Heart left ventricle (tissue), 16 donors: ENCODE measurements at regions of chr11 and their contacts with region 1.

Region 1: GRCh38 chr11:71977743-71978418 is 20.8 kb upstream of the IL18BP start:
- DNase-seq: peak in 1 of 5 donors; percentile 39
- ATAC-seq: peak in 3 of 4 donors; percentile 31 to 69 (median 50)
- H3K4me3 ChIP-seq: no peak overlapping the region
- H3K27ac ChIP-seq: no peak overlapping the region
- H3K4me1 ChIP-seq: peaks cover 0 to 8% (median 0%) of the 10 kb centered on the region in 12 donors
- H3K27me3 ChIP-seq: no peaks in the 10 kb centered on the region
- CTCF ChIP-seq: peak; percentile 64 to 80 (median 72)
- POLR2A ChIP-seq: no peak

Region 2: GRCh38 chr11:71928737-71929452 is 49.0 kb before region 1 on chr11 and contains the start of gene RNF121:
- intact Hi-C with region 1: no loop called
- DNase-seq: peak; percentile 98
- ATAC-seq: peak; percentile 99 to 100 (median 99)
- H3K4me3 ChIP-seq: peak within 1 kb of the TSS; percentile 67 to 93 (median 82)
- H3K27ac ChIP-seq: peak within 1 kb of the TSS; percentile 83 to 97 (median 88)
- H3K4me1 ChIP-seq: peaks cover 4 to 52% (median 30%) of the 10 kb centered on the region in 12 donors
- H3K27me3 ChIP-seq: no peaks in the 10 kb centered on the region
- CTCF ChIP-seq: no peak
- POLR2A ChIP-seq: peak in 1 of 2 donors; percentile 50
- total RNA-seq, gene RNF121: 15.4 to 28.2 (median 22.0) TPM

Region 3: DNA sequence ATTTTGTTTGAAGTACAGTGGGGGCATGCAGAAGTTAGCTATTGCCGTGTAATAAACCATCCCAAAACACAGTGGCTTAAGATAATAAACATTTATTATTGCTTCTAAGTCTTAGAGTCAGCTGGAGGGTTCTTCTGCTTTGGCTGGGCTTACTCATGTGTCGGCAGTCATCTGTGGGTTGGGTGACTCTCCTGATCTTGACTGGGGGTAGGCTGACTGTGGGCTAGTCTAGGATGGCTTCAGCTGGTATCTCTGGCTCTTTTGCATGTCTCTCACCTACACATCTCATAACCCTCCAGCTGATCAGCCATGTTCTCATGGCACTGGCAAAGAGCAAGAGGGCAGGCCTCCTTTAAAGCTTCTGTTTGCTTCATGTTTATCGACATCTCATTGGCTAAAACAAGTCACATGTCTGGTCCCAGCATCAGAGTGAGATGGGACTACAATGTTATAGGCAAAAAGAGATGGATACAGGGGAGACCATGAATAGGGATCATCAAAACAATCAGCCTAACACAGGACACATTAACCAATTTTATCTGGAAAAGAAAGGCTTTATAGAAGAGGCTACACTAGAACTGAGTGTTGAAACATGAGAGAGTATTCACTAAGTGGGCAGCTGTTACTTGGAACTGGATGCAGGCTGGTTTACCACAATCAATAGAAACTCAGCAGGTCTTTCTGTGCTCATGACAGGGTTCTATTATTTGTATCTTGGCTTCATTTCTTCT is 107.9 kb after region 1 on chr11:
- intact Hi-C with region 1: loop called in 6 of 10 experiments (anchors 2 to 5 kb)
- DNase-seq: no peak
- ATAC-seq: no peak
- H3K4me3 ChIP-seq: no peak overlapping the region
- H3K27ac ChIP-seq: no peak overlapping the region
- H3K4me1 ChIP-seq: peaks cover 0 to 22% (median 7%) of the 10 kb centered on the region in 12 donors
- H3K27me3 ChIP-seq: no peaks in the 10 kb centered on the region
- CTCF ChIP-seq: no peak
- POLR2A ChIP-seq: no peak

Region 4: GRCh38 chr11:72091005-72091691 is 113.3 kb after region 1 on chr11:
- intact Hi-C with region 1: loop called in 7 of 10 experiments (anchors 2 to 5 kb)
- DNase-seq: peak in 4 of 5 donors; percentile 73 to 78 (median 74)
- ATAC-seq: peak; percentile 73 to 95 (median 92)
- H3K4me3 ChIP-seq: no peak overlapping the region
- H3K27ac ChIP-seq: peak overlapping the region in 4 of 12 donors; percentile 12 to 77 (median 36)
- H3K4me1 ChIP-seq: peaks cover 0 to 25% (median 8%) of the 10 kb centered on the region in 12 donors
- H3K27me3 ChIP-seq: no peaks in the 10 kb centered on the region
- CTCF ChIP-seq: peak; percentile 79 to 92 (median 84)
- POLR2A ChIP-seq: no peak

Region 5: GRCh38 chr11:72141066-72141465 is 163.2 kb after region 1 on chr11:
- intact Hi-C with region 1: loop called in 4 of 10 experiments (anchors 5 kb)
- DNase-seq: no peak
- ATAC-seq: no peak
- H3K4me3 ChIP-seq: no peak overlapping the region
- H3K27ac ChIP-seq: no peak overlapping the region
- H3K4me1 ChIP-seq: peaks cover 0 to 5% (median 0%) of the 10 kb centered on the region in 12 donors
- H3K27me3 ChIP-seq: no peaks in the 10 kb centered on the region
- CTCF ChIP-seq: no peak
- POLR2A ChIP-seq: no peak

Region 6: GRCh38 chr11:72179804-72180396 is 202.0 kb after region 1 on chr11:
- intact Hi-C with region 1: loop called in 1 of 10 experiments (anchors 5 kb)
- DNase-seq: no peak
- ATAC-seq: no peak
- H3K4me3 ChIP-seq: no peak overlapping the region
- H3K27ac ChIP-seq: no peak overlapping the region
- H3K4me1 ChIP-seq: no peaks in the 10 kb centered on the region
- H3K27me3 ChIP-seq: no peaks in the 10 kb centered on the region
- CTCF ChIP-seq: no peak
- POLR2A ChIP-seq: no peak

Region 7: GRCh38 chr11:72425053-72425980 is 447.4 kb after region 1 on chr11:
- intact Hi-C with region 1: loop called in 6 of 10 experiments (anchors 5 to 10 kb)
- DNase-seq: no peak
- ATAC-seq: peak in 3 of 4 donors; percentile 50 to 72 (median 62)
- H3K4me3 ChIP-seq: no peak overlapping the region
- H3K27ac ChIP-seq: no peak overlapping the region
- H3K4me1 ChIP-seq: peaks cover 0 to 17% (median 0%) of the 10 kb centered on the region in 12 donors
- H3K27me3 ChIP-seq: no peaks in the 10 kb centered on the region
- CTCF ChIP-seq: no peak
- POLR2A ChIP-seq: no peak

Region 8: DNA sequence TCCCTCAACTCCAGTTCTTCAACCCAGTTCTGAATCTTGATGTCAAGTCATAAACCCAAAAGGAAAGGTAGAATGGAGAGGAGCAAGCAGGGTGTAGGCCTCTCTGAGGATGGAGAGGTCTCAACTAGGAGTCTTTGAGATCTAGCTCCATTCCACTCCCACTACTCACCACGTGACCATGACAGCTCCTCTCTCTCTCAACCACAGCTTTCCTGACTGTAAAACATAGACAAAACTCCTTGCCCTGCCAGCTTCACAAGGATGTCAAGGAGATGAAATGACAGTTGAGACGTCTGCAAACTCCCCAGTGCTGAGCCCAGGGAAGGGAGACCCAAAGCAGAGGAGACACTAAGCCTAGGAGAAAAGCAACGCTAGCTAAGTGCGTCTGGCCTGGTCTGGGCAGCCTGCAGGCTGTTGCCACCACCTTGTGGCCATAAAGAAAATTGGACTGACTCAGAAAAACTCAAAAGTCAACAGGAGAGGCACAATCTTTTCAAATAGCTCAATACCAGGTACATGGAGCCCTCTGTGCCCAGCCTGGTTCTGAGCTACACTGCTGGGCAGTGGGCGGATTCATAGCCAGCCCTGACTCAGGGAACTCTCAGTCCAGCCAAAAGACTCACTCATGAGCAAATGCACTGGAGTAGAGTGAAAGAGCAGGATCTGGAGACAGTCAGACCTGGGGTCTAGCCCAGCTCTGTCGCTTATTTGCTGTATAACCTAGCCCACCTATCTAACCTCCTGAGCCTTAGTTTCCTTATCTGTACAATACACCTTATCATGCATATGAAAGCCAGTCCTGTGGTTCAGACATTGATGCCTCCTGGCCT is 453.1 kb after region 1 on chr11:
- intact Hi-C with region 1: loop called in 6 of 10 experiments (anchors 5 to 10 kb)
- DNase-seq: peak in 3 of 5 donors; percentile 44 to 49 (median 46)
- ATAC-seq: peak in 2 of 4 donors; percentile 16 to 31
- H3K4me3 ChIP-seq: no peak overlapping the region
- H3K27ac ChIP-seq: no peak overlapping the region
- H3K4me1 ChIP-seq: peaks cover 0 to 41% (median 14%) of the 10 kb centered on the region in 12 donors
- H3K27me3 ChIP-seq: no peaks in the 10 kb centered on the region
- CTCF ChIP-seq: peak; percentile 61 to 81 (median 72)
- POLR2A ChIP-seq: no peak